Keratinocyte (primary cell): ENCODE measurements at regions of chr7 and their contacts with region 1.

Region 1: DNA sequence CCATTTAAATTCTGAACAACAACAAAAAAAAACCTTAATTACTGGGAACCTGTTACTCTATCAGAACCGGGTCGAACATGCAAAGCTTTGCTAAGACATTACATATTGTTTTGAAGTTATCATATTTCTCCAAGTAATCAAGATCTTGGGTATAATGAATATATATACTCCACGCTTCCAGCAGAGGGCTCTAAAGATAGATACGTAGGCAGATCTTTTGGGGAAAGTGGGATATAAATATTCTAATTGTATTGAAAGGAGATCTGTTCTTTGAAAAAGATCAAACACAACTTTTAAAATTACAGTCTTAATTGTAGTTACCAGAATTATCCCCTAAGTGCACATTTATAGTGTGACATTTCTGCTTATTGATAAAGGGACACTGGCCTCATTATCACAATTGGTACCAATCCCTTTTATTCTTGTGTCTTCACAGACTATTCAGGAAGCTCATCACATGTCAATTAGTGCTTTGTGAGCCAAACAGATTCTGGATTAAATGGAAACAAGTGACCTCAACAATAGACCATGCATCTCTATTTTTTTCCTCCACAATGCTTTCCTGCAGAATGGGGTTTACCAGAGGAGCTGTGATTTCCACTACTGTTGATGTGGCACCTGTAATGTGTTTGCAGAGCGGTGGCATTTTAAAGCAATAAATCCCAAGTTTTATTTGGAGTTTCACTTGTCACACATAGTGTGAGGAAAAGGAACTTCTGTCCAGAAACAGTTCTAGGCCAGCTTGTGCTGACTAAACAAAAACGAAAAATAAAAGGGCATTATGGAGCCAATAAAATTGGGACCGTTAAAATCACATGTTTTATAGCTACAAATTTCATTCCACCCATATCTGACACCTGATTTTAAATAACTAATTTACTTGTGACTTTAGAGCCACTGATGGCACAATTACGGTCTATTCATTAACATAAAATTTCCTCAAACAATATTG is 122.4 kb downstream of the CTTNBP2 start:
- DNase-seq: no peak
- H3K4me3 ChIP-seq: no peak overlapping the region
- H3K27ac ChIP-seq: no peak overlapping the region
- H3K4me1 ChIP-seq: no peaks in the 10 kb centered on the region
- H3K27me3 ChIP-seq: no peaks in the 10 kb centered on the region
- CTCF ChIP-seq: peak in 1 of 3 experiments; percentile 21

Region 2: DNA sequence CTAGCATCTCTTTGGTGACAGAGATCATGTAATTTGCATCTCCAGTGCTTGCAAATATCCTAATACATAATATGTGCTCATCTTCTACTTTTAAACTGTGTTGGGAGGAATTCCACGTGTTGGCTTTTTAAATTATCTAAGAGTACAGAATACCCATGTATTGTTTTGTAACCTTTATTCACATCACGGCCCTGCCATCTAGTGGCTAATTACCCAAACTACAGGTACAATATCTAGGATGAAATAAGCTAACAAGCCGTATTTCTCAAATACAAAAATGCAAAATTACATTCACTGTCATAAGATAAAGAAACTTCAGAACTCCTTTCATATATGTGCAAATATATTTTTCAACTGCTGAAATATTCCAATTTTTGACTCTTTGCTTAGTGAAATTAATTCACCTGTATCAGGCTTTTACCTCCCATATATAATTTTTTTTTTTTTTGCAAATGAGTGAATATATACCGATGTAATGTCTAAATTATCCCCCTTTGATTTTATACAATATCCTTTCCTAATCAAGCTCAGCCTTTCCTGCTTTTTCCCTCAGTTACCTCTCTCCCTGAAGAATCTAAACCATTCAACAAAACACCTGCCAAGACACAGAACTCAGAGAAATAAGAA is 402.8 kb after region 1 on chr7:
- dilution Hi-C with region 1: loop called (anchors 25 kb)
- DNase-seq: no peak
- H3K4me3 ChIP-seq: no peak overlapping the region
- H3K27ac ChIP-seq: no peak overlapping the region
- H3K4me1 ChIP-seq: no peaks in the 10 kb centered on the region
- H3K27me3 ChIP-seq: no peaks in the 10 kb centered on the region
- CTCF ChIP-seq: peak in 2 of 3 experiments; percentile 41 to 50